ENCODE measurements at regions of chrX and their contacts with region 1.

Region 1: DNA sequence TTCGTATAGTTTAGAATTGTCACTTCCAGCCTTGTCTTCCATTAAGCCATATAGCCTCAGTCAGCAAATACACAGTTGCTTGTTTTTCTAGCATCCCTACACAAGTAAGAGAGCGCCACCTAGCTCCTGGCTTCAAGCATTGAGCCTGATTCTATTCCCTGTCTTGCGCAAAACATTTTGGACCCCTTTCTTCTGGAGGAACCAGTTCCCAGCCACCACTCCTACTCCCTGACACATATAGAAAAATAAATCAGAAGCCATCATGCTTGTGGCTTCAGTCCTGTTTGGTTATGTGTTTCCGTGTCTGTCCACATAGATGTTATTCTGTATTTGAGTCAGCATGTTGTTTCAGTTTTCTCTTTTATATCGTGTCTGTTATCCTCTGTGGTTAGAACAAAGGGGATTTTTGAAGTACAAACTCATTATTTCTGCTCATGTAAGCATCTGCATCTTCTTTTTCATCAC is 59.9 kb downstream of the GK start:
- DNase-seq: peak in 1 of 2 experiments; percentile 22
- H3K4me3 ChIP-seq: no peak overlapping the region
- H3K27ac ChIP-seq: no peak overlapping the region
- H3K4me1 ChIP-seq: no peaks in the 10 kb centered on the region
- H3K27me3 ChIP-seq: no peaks in the 10 kb centered on the region
- CTCF ChIP-seq: peak; percentile 70

Region 2: GRCh38 chrX:30690330-30690729 is 22.8 kb before region 1 on chrX:
- CTCF ChIA-PET with region 1: no interaction called
- POLR2A ChIA-PET with region 1: no interaction called
- intact Hi-C with region 1: loop called (anchors 2 kb)
- DNase-seq: no peak
- H3K4me3 ChIP-seq: no peak overlapping the region
- H3K27ac ChIP-seq: no peak overlapping the region
- H3K4me1 ChIP-seq: no peaks in the 10 kb centered on the region
- H3K27me3 ChIP-seq: no peaks in the 10 kb centered on the region
- CTCF ChIP-seq: no peak

Region 3: GRCh38 chrX:30781711-30782444 is 68.8 kb after region 1 on chrX:
- CTCF ChIA-PET with region 1: no interaction called
- POLR2A ChIA-PET with region 1: no interaction called
- intact Hi-C with region 1: no loop called
- DNase-seq: no peak
- H3K4me3 ChIP-seq: no peak overlapping the region
- H3K27ac ChIP-seq: no peak overlapping the region
- H3K4me1 ChIP-seq: no peaks in the 10 kb centered on the region
- H3K27me3 ChIP-seq: no peaks in the 10 kb centered on the region
- CTCF ChIP-seq: no peak

Region 4: GRCh38 chrX:30906726-30907125 is 193.6 kb after region 1 on chrX:
- CTCF ChIA-PET with region 1: no interaction called
- POLR2A ChIA-PET with region 1: no interaction called
- intact Hi-C with region 1: no loop called
- DNase-seq: peak; percentile 20 to 58
- H3K4me3 ChIP-seq: no peak overlapping the region
- H3K27ac ChIP-seq: no peak overlapping the region
- H3K4me1 ChIP-seq: peaks cover 7% of the 10 kb centered on the region; the same call in 1 of the 2 replicates
- H3K27me3 ChIP-seq: no peaks in the 10 kb centered on the region
- CTCF ChIP-seq: no peak